ENCODE measurements at regions of chr9 and their contacts with region 1.

Region 1: DNA sequence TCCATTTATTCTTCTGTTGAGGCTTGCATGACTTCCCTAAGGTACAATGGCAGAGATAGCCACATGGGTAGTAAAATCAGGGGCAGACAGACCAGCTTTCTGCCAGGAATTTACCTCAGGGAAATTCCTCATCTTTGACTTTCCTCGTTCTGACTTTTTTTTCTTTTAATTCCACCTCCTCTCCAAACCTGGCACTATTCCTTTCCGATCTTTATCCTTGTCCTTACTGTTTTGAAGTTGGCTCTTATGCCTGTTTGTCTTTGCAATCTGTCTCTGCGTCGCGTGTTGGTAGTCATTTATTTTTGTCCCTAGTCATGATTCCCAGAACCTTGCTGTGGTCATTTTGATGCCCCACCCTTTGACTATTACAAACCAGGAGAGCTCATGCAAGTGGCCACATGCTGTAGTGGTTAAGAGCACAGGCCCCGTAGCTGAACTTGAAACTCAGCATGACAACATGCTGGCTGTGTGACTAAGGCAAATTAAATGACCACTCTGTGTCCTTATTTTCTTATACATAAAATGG is 19.0 kb downstream of the TMC1 start:
- H3K4me3 ChIP-seq: no peak overlapping the region
- H3K27ac ChIP-seq: no peak overlapping the region
- H3K4me1 ChIP-seq: no peaks in the 10 kb centered on the region
- CTCF ChIP-seq: no peak

Region 2: DNA sequence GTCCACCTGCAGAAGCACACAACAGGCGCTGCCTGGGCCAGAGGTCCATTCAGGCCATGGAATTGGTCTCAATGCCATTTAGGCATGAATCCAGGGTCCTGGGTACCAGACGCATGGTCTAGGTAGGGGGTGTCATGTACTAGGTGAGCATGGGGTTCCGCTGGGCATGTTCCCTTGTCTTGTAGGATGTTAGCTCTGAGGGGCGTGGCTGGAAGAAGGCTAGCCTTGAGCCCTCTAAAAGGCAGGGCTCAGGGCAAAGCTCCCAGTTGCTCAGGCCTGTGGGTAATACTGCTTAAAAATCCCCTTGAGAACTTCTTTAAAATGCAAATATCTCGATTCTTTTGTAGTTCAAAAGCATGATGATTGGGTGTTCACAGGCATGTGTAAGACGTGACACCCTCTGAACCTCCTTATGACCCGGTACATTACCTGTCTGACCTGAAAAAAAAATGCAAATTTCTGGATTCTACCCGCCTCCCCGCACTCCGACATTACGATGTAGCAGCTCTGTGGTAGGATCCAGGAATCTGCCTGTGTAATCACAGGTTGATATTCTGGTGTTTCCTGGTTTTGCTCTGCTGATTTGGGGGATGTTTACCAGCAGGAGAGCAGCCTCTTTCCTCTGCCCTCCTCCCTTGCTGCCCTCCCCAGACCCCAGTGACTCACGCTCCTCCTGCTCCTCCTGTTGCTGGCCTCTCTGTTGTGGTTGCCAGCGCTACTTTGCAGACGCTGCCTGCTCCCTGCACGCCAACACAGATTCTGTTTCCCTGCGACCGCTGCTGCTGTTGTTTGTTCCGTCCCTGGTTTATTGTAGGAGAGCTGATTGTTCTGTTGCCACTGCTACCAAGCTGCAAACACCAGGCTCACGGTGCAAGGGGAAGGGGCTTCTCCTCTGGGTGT is 13.3 kb before region 1 on chr9:
- CTCF ChIA-PET with region 1: interaction called, 12 read pairs
- POLR2A ChIA-PET with region 1: no interaction called
- H3K4me3 ChIP-seq: peak overlapping the region; percentile 5; the same call in 1 of the 2 replicates
- H3K27ac ChIP-seq: no peak overlapping the region
- H3K4me1 ChIP-seq: no peaks in the 10 kb centered on the region
- CTCF ChIP-seq: no peak

Region 3: GRCh38 chr9:73880101-73880500 is 1339.7 kb after region 1 on chr9:
- CTCF ChIA-PET with region 1: no interaction called
- POLR2A ChIA-PET with region 1: no interaction called
- H3K4me3 ChIP-seq: no peak overlapping the region
- H3K27ac ChIP-seq: no peak overlapping the region
- H3K4me1 ChIP-seq: no peaks in the 10 kb centered on the region
- CTCF ChIP-seq: no peak

Measured in HEK293 (cell line).